GM12878 (cell line): ENCODE measurements at regions of chr14 and their contacts with region 1.

Region 1: DNA sequence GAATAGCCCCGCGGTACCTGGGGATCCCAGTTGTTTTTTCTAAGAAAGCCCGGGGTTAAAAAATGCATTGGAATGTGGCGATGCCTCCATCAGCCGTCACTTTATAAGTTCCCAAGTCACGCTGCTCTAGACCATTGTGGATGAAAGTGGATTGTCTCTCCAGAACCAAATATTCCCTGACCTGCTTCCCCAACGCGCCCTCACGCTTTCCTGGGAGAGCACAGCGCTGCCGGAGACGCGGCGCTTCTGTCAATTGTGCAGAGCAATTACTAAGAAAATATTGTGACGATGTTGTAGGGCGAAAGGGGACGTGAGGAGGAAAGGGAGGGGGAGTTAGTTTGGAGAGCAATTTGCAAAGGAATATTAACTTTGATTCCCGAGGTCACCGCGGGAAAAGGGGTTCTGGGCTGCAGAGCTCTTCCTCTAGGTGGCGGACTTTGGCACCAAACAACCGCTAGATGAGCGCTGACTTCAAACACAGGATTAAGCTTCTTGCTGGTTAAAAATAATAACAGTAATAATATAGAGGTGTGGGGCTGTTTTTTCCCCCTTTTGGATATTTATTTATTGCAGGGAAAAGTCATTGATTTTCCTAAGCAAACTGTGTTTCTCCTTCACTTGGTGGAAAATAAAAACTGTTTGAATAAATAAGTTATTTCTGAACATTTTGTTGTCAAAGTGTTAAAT is 9.6 kb upstream of the FOXG1 start:
- DNase-seq: no peak
- ATAC-seq: peak; percentile 49; the same call in 1 of the 3 replicates
- H3K4me3 ChIP-seq: no peak overlapping the region
- H3K27ac ChIP-seq: no peak overlapping the region
- H3K4me1 ChIP-seq: no peaks in the 10 kb centered on the region
- H3K27me3 ChIP-seq: peaks cover 0 to 14% of the 10 kb centered on the region in 2 experiments; a peak in 2 of 4 replicates
- CTCF ChIP-seq: peak; percentile 49 to 62 (median 54); a peak in 5 of 6 replicates
- EP300 ChIP-seq: no peak
- POLR2A ChIP-seq: no peak
- RAD21 ChIP-seq: peak; percentile 72

Region 2: GRCh38 chr14:28661171-28661772 is 95.8 kb before region 1 on chr14:
- CTCF ChIA-PET with region 1: no interaction called
- POLR2A ChIA-PET with region 1: no interaction called
- RAD21 ChIA-PET with region 1: no interaction called
- SMC1A ChIA-PET with region 1: no interaction called
- in situ Hi-C with region 1: no loop called
- intact Hi-C with region 1: no loop called
- DNase-seq: no peak
- ATAC-seq: no peak
- H3K4me3 ChIP-seq: no peak overlapping the region
- H3K27ac ChIP-seq: no peak overlapping the region
- H3K4me1 ChIP-seq: no peaks in the 10 kb centered on the region
- H3K27me3 ChIP-seq: no peaks in the 10 kb centered on the region
- CTCF ChIP-seq: no peak
- EP300 ChIP-seq: no peak
- POLR2A ChIP-seq: no peak
- RAD21 ChIP-seq: no peak

Region 3: DNA sequence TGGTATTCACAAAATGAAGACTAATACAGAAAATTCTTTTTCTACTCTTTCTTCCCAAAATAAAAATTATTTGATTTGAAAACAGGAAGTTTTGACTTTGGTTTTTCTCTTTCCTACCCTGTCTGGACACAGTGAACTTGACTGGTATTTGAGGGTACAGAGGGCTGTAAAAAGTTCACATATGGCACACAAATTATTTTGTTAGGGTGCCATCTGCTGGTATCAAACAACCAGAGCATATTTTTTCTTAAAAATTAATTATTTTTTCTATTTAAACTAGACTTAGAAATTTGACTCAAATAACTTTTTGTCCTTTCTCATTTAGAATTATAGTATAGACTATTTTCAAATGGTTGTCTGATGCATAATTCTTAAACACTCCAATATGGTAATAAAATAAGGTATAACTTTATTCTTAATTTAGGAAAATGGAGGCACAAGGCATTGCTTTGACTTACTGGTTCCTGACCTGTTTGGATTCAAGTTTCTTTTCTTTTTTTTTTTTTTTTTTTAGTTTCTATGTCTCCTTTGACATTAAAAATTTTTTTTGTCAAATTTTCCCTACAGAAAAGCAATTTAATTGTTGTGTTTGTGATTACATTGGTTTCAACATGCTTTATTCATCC is 780.0 kb after region 1 on chr14:
- CTCF ChIA-PET with region 1: interaction called, 3 read pairs
- POLR2A ChIA-PET with region 1: no interaction called
- RAD21 ChIA-PET with region 1: no interaction called
- SMC1A ChIA-PET with region 1: no interaction called
- in situ Hi-C with region 1: loop called (anchors 5 kb)
- intact Hi-C with region 1: loop called (anchors 2 kb)
- DNase-seq: no peak
- ATAC-seq: no peak
- H3K4me3 ChIP-seq: no peak overlapping the region
- H3K27ac ChIP-seq: no peak overlapping the region
- H3K4me1 ChIP-seq: no peaks in the 10 kb centered on the region
- H3K27me3 ChIP-seq: no peaks in the 10 kb centered on the region
- CTCF ChIP-seq: peak in 2 of 3 experiments; percentile 11 to 23; a peak in 1 of 6 replicates
- EP300 ChIP-seq: no peak
- POLR2A ChIP-seq: no peak
- RAD21 ChIP-seq: peak; percentile 46